Panc1 (cell line): ENCODE measurements at regions of chrX and their contacts with region 1.

Region 1: GRCh38 chrX:120499301-120500072 is 30.4 kb upstream of the LAMP2 start:
- DNase-seq: no peak
- ATAC-seq: no peak
- H3K4me3 ChIP-seq: no peak overlapping the region
- H3K27ac ChIP-seq: no peak overlapping the region
- H3K4me1 ChIP-seq: no peaks in the 10 kb centered on the region
- H3K27me3 ChIP-seq: no peaks in the 10 kb centered on the region
- CTCF ChIP-seq: no peak

Region 2: DNA sequence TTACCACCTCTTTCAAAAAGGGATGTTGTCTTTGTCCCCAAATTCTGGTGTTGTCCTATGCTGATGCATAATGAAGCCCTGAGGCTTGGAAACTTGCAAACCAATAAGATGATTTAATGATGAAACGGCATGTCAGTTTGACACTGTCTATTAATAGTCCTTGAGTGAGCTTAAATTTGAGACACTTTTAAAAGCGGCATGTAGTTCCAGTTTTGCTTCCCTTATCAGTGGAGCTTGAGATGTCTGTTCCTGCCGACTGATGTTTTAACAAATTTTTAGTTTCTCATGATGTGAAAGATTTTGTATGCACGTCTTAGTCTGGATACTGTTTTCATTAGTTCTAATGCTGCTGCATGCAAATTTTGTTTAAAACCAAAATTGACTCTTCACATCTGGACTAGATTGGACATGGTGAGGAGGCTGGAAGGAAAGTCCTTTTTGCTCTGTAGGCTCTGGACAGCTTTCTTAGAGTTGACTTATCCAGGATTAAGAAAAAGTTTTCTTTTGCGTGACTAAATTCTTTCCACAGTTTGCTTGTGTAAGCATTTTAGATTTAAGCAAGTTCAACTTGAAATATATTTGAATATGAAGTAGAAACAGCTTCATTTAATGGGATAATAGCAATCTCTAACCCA is 118.6 kb after region 1 on chrX:
- CTCF ChIA-PET with region 1: no interaction called
- POLR2A ChIA-PET with region 1: no interaction called
- in situ Hi-C with region 1: no loop called
- intact Hi-C with region 1: no loop called
- DNase-seq: no peak
- ATAC-seq: no peak
- H3K4me3 ChIP-seq: no peak overlapping the region
- H3K27ac ChIP-seq: no peak overlapping the region
- H3K4me1 ChIP-seq: no peaks in the 10 kb centered on the region
- H3K27me3 ChIP-seq: no peaks in the 10 kb centered on the region
- CTCF ChIP-seq: no peak

Region 3: GRCh38 chrX:120662662-120663061 is 163.2 kb after region 1 on chrX:
- CTCF ChIA-PET with region 1: interaction called, 3 read pairs
- POLR2A ChIA-PET with region 1: no interaction called
- in situ Hi-C with region 1: no loop called
- intact Hi-C with region 1: loop called (anchors 1 kb)
- DNase-seq: no peak
- ATAC-seq: no peak
- H3K4me3 ChIP-seq: no peak overlapping the region
- H3K27ac ChIP-seq: no peak overlapping the region
- H3K4me1 ChIP-seq: no peaks in the 10 kb centered on the region
- H3K27me3 ChIP-seq: no peaks in the 10 kb centered on the region
- CTCF ChIP-seq: no peak

Region 4: DNA sequence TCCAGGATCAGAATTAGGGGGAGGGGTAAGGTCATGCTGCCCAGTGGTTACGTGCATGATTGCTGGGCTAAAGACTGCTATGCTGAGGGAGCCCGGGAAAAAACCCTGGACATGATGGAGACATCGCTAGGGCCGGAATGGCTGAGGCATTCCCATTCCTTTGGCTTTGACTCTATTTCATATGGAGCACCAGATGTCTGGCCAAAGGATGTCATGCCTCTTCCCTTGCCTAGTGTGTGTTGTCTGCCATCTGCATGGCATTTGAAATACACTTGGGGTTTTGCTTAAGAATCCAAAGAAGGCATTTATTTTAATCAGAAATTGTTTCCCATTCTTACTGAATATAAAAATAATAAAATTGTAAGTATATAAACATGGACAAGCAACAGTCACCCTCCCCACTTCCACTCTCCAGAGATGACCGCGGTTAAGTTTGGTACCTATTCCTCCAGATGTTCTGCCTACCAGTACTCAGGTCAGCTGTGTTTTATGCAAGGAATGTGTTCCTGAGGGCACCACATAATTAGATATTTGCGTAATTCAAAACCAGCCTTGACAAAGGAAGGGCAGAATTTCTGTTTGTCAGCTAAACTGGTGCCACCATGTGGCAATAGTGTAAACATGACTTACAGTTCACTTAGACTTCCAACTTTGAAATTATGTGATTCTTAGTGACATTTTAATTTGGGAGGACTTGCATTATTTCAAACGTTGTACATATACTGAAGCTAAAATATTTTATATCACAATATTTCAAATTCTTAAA is 270.3 kb after region 1 on chrX:
- CTCF ChIA-PET with region 1: no interaction called
- POLR2A ChIA-PET with region 1: no interaction called
- in situ Hi-C with region 1: no loop called
- intact Hi-C with region 1: loop called (anchors 2 kb)
- DNase-seq: peak; percentile 12
- ATAC-seq: peak; percentile 71; the same call in 1 of the 2 replicates
- H3K4me3 ChIP-seq: no peak overlapping the region
- H3K27ac ChIP-seq: no peak overlapping the region
- H3K4me1 ChIP-seq: no peaks in the 10 kb centered on the region
- H3K27me3 ChIP-seq: no peaks in the 10 kb centered on the region
- CTCF ChIP-seq: peak; percentile 56